IMR-90 (cell line): ENCODE measurements at regions of chr18 and their contacts with region 1.

Region 1: DNA sequence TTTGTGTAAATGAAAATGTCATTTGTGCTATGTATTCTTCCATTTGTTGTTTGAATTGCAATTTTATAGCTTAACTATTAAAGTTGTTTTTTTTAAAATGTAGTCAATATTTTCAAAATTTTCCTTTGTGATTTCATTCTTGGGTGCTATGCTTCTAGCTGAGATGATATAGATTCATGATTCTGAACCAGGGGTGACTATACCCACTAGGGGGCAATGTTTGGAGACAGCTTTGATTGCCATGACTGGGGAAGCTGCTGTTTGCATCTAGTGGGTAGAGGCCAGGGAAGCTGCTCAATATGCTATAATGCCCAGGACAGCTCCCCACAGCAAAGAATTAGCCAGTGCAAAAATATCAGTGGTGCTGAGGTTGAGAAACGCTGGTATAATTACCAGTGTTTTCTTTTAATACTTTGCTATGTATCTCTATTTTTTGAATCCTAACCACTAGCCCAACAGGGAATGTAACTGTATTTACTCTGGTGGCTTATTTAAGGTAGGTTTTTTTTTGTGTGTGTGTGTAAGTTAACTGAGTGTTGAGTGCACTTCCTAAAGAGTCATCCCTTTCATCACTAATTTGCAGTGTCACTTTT is 99.7 kb downstream of the MEP1B start:
- DNase-seq: peak; percentile 72
- ATAC-seq: peak; percentile 91
- H3K4me3 ChIP-seq: no peak overlapping the region
- H3K27ac ChIP-seq: no peak overlapping the region
- H3K4me1 ChIP-seq: no peaks in the 10 kb centered on the region
- H3K27me3 ChIP-seq: no peaks in the 10 kb centered on the region
- CTCF ChIP-seq: peak; percentile 76
- POLR2A ChIP-seq: no peak
- RAD21 ChIP-seq: peak; percentile 82

Region 2: GRCh38 chr18:32200766-32201165 is 88.8 kb before region 1 on chr18:
- CTCF ChIA-PET with region 1: no interaction called
- POLR2A ChIA-PET with region 1: no interaction called
- dilution Hi-C with region 1: no loop called
- in situ Hi-C with region 1: no loop called
- intact Hi-C with region 1: no loop called
- DNase-seq: no peak
- ATAC-seq: no peak
- H3K4me3 ChIP-seq: no peak overlapping the region
- H3K27ac ChIP-seq: no peak overlapping the region
- H3K4me1 ChIP-seq: no peaks in the 10 kb centered on the region
- H3K27me3 ChIP-seq: no peaks in the 10 kb centered on the region; the same call in 1 of the 2 replicates
- CTCF ChIP-seq: no peak
- POLR2A ChIP-seq: no peak
- RAD21 ChIP-seq: no peak

Region 3: GRCh38 chr18:32271672-32272208 is 17.8 kb before region 1 on chr18:
- CTCF ChIA-PET with region 1: interaction called, 10 read pairs
- POLR2A ChIA-PET with region 1: no interaction called
- dilution Hi-C with region 1: no loop called
- in situ Hi-C with region 1: no loop called
- intact Hi-C with region 1: no loop called
- DNase-seq: peak; percentile 55
- ATAC-seq: peak; percentile 95
- H3K4me3 ChIP-seq: no peak overlapping the region
- H3K27ac ChIP-seq: no peak overlapping the region
- H3K4me1 ChIP-seq: no peaks in the 10 kb centered on the region
- H3K27me3 ChIP-seq: no peaks in the 10 kb centered on the region
- CTCF ChIP-seq: peak; percentile 92
- POLR2A ChIP-seq: no peak
- RAD21 ChIP-seq: peak; percentile 97